Activated T-helper 2 cell treated with anti-CD3 and anti-CD28 coated beads, Interferon-gamma antibody, Interleukin-2, Interleukin-4, amounts not matched to agents 10 μg/mL and 5 μg/mL and 100 μg/mL, durations not matched to agents 14 hours and 24 hours and 36 hours (primary cell): ENCODE measurements at regions of chr1 and their contacts with region 1.

Region 1: DNA sequence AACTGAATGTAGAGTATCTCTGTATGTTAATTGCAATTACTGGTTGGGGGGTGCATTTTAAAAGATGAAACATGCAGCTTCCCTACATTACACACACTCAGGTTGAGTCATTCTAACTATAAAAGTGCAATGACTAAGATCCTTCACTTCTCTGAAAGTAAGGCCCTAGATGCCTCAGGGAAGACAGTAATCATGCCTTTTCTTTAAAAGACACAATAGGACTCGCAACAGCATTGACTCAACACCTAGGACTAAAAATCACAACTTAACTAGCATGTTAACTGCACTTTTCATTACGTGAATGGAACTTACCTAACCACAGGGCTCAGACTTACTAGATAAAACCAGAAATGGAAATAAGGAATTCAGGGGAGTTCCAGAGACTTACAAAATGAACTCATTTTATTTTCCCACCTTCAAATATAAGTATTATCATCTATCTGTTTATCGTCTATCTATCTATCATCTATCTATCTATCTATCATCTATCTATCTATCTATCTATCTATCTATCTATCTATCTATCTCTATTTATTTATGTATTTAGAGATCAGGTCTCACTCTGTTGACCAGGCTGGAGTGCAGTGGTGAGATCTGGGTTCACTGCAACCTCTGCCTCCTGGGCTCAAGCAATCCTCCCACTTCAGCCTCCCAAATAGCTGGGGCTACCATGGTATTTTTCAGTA is 47.8 kb downstream of the CHML start:
- DNase-seq: no peak
- H3K4me3 Mint-ChIP-seq: no peak overlapping the region
- H3K27ac Mint-ChIP-seq: peak overlapping the region; percentile 53
- H3K4me1 Mint-ChIP-seq: peaks cover 20% of the 10 kb centered on the region
- H3K27me3 Mint-ChIP-seq: no peaks in the 10 kb centered on the region

Region 2: GRCh38 chr1:241253466-241253865 is 338.9 kb before region 1 on chr1:
- intact Hi-C with region 1: no loop called
- DNase-seq: no peak
- H3K4me3 Mint-ChIP-seq: no peak overlapping the region
- H3K27ac Mint-ChIP-seq: no peak overlapping the region
- H3K4me1 Mint-ChIP-seq: no peaks in the 10 kb centered on the region
- H3K27me3 Mint-ChIP-seq: no peaks in the 10 kb centered on the region

Region 3: GRCh38 chr1:241551759-241552638 is 40.4 kb before region 1 on chr1:
- intact Hi-C with region 1: loop called (anchors 1 kb)
- DNase-seq: peak; percentile 19
- H3K4me3 Mint-ChIP-seq: peak overlapping the region; percentile 78
- H3K27ac Mint-ChIP-seq: peak overlapping the region; percentile 96
- H3K4me1 Mint-ChIP-seq: peaks cover 21% of the 10 kb centered on the region
- H3K27me3 Mint-ChIP-seq: peaks cover 10% of the 10 kb centered on the region

Region 4: GRCh38 chr1:241638909-241639622 is 46.6 kb after region 1 on chr1:
- intact Hi-C with region 1: no loop called
- DNase-seq: no peak
- H3K4me3 Mint-ChIP-seq: peak overlapping the region; percentile 89
- H3K27ac Mint-ChIP-seq: peak overlapping the region; percentile 83
- H3K4me1 Mint-ChIP-seq: peaks cover 49% of the 10 kb centered on the region
- H3K27me3 Mint-ChIP-seq: no peaks in the 10 kb centered on the region

Region 5: DNA sequence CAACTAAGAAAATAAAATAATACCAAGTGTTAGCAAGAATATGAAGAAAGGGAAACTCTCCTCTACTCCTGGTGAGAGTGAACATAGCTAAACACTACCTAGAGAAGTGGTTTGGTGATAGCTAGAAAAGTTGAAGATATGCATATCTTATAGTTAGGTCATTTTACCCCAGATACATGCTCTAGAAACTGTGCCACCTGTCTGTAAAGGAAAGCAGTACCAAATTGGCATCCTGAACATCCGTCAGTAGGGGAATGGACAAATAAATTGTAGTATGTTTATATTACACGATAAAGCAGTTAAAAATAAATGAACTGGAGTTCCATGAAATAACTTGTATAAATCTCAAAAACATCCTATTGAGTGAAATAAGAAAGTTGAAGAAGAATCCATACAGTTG is 164.2 kb after region 1 on chr1:
- intact Hi-C with region 1: no loop called
- DNase-seq: no peak
- H3K4me3 Mint-ChIP-seq: no peak overlapping the region
- H3K27ac Mint-ChIP-seq: no peak overlapping the region
- H3K4me1 Mint-ChIP-seq: no peaks in the 10 kb centered on the region
- H3K27me3 Mint-ChIP-seq: peaks cover 2% of the 10 kb centered on the region